ENCODE measurements at regions of chr19 and their contacts with region 1.

Region 1: GRCh38 chr19:43784981-43785808 is 4.4 kb upstream of the KCNN4 start:
- DNase-seq: peak; percentile 59 to 72 (median 62)
- H3K4me3 ChIP-seq: no peak overlapping the region
- H3K4me3 Mint-ChIP-seq: peak overlapping the region in 7 of 8 donors; percentile 73 to 84 (median 79)
- H3K27ac ChIP-seq: peak overlapping the region; percentile 46
- H3K27ac Mint-ChIP-seq: peak overlapping the region; percentile 77 to 96 (median 93)
- H3K4me1 ChIP-seq: peaks cover 47% of the 10 kb centered on the region
- H3K4me1 Mint-ChIP-seq: peaks cover 30 to 52% (median 37%) of the 10 kb centered on the region in 4 donors
- H3K27me3 ChIP-seq: no peaks in the 10 kb centered on the region
- H3K27me3 Mint-ChIP-seq: peaks cover 0 to 2% of the 10 kb centered on the region in 2 donors

Region 2: GRCh38 chr19:43562698-43563241 is 222.4 kb before region 1 on chr19:
- CTCF ChIA-PET with region 1: no interaction called
- POLR2A ChIA-PET with region 1: no interaction called
- intact Hi-C with region 1: loop called (anchors 10 kb)
- DNase-seq: peak; percentile 82 to 93 (median 86)
- H3K4me3 ChIP-seq: peak overlapping the region in 1 of 2 donors; percentile 32
- H3K4me3 Mint-ChIP-seq: peak overlapping the region; percentile 63 to 86 (median 74)
- H3K27ac ChIP-seq: peak overlapping the region; percentile 72
- H3K27ac Mint-ChIP-seq: peak overlapping the region; percentile 92 to 98 (median 96)
- H3K4me1 ChIP-seq: peaks cover 45% of the 10 kb centered on the region
- H3K4me1 Mint-ChIP-seq: peaks cover 36 to 65% (median 43%) of the 10 kb centered on the region in 4 donors
- H3K27me3 ChIP-seq: no peaks in the 10 kb centered on the region
- H3K27me3 Mint-ChIP-seq: no peaks in the 10 kb centered on the region

Region 3: DNA sequence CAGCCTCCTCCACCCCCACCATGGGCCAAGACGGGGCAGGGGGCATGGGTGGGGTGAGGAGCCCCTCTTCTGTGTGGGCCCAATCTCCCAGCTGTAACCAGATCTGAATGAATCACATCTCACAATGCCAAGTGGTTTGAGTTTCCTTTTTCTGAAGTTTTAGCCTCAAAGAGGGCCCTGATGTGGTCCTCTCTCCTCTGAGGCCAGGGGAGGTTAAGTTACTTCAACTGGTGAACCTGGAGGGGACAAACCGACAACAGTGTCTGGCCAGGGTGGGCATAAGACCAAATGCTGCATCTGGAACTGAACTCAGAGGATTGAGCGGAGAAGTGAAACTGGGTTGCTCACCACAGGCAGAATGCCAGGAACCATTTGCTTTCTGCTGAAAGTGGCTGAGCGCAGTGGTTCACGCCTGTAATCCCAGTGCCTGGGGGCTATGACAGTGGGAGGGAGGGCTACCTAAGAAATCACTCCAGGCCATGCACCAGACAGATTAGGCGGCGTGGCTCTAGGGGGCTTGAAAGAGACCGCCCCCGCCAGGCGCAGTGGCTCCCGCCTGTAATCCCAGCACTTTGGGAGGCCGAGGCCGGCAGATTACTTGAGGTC is 84.7 kb before region 1 on chr19:
- CTCF ChIA-PET with region 1: no interaction called
- POLR2A ChIA-PET with region 1: no interaction called
- intact Hi-C with region 1: no loop called
- DNase-seq: peak in 1 of 5 donors; percentile 2
- H3K4me3 ChIP-seq: peak overlapping the region in 1 of 2 donors; percentile 29
- H3K4me3 Mint-ChIP-seq: peak overlapping the region; percentile 79 to 91 (median 86)
- H3K27ac ChIP-seq: peak overlapping the region; percentile 74
- H3K27ac Mint-ChIP-seq: peak overlapping the region; percentile 71 to 99 (median 98)
- H3K4me1 ChIP-seq: peaks cover 14% of the 10 kb centered on the region
- H3K4me1 Mint-ChIP-seq: peaks cover 16 to 32% (median 19%) of the 10 kb centered on the region in 4 donors
- H3K27me3 ChIP-seq: no peaks in the 10 kb centered on the region
- H3K27me3 Mint-ChIP-seq: peaks cover 0 to 4% of the 10 kb centered on the region in 2 donors

Region 4: DNA sequence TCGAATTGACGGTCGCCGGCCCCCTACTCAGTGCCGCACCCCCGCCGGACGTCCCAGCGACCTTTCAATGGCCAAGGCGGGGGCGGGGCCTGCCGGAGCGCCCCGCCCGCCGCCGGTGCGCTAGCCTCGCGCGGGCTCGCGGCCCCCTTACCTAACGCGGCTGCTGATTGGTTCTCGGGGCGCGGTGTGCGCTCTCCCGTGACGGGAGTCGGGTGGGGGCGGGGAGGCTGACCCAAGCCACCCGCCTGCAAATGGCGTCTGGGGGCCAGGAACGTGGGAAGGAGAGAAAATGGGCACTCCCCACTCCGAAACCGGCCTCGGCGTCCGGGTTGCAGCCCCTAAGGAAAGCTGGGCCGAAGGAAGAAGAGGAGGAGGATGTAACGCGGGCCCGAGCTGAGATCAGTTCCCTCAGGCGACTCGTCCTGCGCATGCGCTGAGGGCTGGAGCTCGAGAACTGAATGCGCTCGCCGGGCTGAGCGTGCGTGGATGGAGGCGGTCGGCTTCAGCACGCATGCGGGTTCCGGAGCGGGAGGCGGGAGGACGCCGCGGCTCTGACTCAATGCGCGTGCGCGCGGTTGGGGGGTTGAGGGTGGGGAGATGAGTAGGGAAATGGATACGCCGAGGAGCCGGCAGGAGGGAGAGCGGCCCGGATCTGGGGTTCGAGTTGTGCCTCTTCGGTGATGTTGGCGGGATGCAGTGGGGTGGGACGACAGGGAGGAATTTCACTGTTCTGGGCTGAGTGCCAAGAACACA is 30.5 kb before region 1 on chr19 and contains the start of gene SMG9:
- CTCF ChIA-PET with region 1: interaction called, 4 read pairs
- POLR2A ChIA-PET with region 1: interaction called, 106 read pairs
- intact Hi-C with region 1: loop called (anchors 1 kb)
- DNase-seq: peak; percentile 98 to 100 (median 99)
- H3K4me3 ChIP-seq: peak within 1 kb of the TSS; percentile 94 to 98
- H3K4me3 Mint-ChIP-seq: peak within 1 kb of the TSS; percentile 90 to 97 (median 96)
- H3K27ac ChIP-seq: peak within 1 kb of the TSS; percentile 93
- H3K27ac Mint-ChIP-seq: peak within 1 kb of the TSS; percentile 96 to 99 (median 99)
- H3K4me1 ChIP-seq: peaks cover 38% of the 10 kb centered on the region
- H3K4me1 Mint-ChIP-seq: peaks cover 22 to 63% (median 41%) of the 10 kb centered on the region in 4 donors
- H3K27me3 ChIP-seq: no peaks in the 10 kb centered on the region
- H3K27me3 Mint-ChIP-seq: no peaks in the 10 kb centered on the region
- total RNA-seq, gene SMG9: 57.6 to 57.9 TPM

Region 5: GRCh38 chr19:43765109-43765876 is 19.9 kb before region 1 on chr19:
- CTCF ChIA-PET with region 1: interaction called, 94 read pairs
- POLR2A ChIA-PET with region 1: interaction called, 104 read pairs
- intact Hi-C with region 1: loop called (anchors 1 kb)
- DNase-seq: peak; percentile 59 to 91 (median 63)
- H3K4me3 ChIP-seq: peak overlapping the region in 1 of 2 donors; percentile 25
- H3K4me3 Mint-ChIP-seq: peak overlapping the region; percentile 34 to 75 (median 66)
- H3K27ac ChIP-seq: peak overlapping the region; percentile 50
- H3K27ac Mint-ChIP-seq: peak overlapping the region; percentile 83 to 94 (median 90)
- H3K4me1 ChIP-seq: peaks cover 40% of the 10 kb centered on the region
- H3K4me1 Mint-ChIP-seq: peaks cover 26 to 49% (median 39%) of the 10 kb centered on the region in 4 donors
- H3K27me3 ChIP-seq: no peaks in the 10 kb centered on the region
- H3K27me3 Mint-ChIP-seq: no peaks in the 10 kb centered on the region

Region 6: GRCh38 chr19:43809762-43810696 is 24.8 kb after region 1 on chr19:
- CTCF ChIA-PET with region 1: interaction called, 5 read pairs
- POLR2A ChIA-PET with region 1: no interaction called
- intact Hi-C with region 1: loop called (anchors 2 kb)
- DNase-seq: peak in 4 of 5 donors; percentile 49 to 58 (median 55)
- H3K4me3 ChIP-seq: no peak overlapping the region
- H3K4me3 Mint-ChIP-seq: no peak overlapping the region
- H3K27ac ChIP-seq: no peak overlapping the region
- H3K27ac Mint-ChIP-seq: no peak overlapping the region
- H3K4me1 ChIP-seq: peaks cover 14% of the 10 kb centered on the region
- H3K4me1 Mint-ChIP-seq: peaks cover 0 to 13% (median 3%) of the 10 kb centered on the region in 4 donors
- H3K27me3 ChIP-seq: no peaks in the 10 kb centered on the region
- H3K27me3 Mint-ChIP-seq: peaks cover 1 to 11% of the 10 kb centered on the region in 2 donors

Measured in CD4-positive, alpha-beta memory T cell (primary cell).